ENCODE measurements at regions of chr6 and their contacts with region 1.

Region 1: GRCh38 chr6:142387997-142388815 is 86.4 kb downstream of the ADGRG6 start:
- DNase-seq: peak; percentile 72
- ATAC-seq: peak; percentile 67
- H3K4me3 ChIP-seq: no peak overlapping the region
- H3K27ac ChIP-seq: peak overlapping the region; percentile 92
- H3K4me1 ChIP-seq: peaks cover 37% of the 10 kb centered on the region
- H3K27me3 ChIP-seq: no peaks in the 10 kb centered on the region
- CTCF ChIP-seq: peak; percentile 77

Region 2: DNA sequence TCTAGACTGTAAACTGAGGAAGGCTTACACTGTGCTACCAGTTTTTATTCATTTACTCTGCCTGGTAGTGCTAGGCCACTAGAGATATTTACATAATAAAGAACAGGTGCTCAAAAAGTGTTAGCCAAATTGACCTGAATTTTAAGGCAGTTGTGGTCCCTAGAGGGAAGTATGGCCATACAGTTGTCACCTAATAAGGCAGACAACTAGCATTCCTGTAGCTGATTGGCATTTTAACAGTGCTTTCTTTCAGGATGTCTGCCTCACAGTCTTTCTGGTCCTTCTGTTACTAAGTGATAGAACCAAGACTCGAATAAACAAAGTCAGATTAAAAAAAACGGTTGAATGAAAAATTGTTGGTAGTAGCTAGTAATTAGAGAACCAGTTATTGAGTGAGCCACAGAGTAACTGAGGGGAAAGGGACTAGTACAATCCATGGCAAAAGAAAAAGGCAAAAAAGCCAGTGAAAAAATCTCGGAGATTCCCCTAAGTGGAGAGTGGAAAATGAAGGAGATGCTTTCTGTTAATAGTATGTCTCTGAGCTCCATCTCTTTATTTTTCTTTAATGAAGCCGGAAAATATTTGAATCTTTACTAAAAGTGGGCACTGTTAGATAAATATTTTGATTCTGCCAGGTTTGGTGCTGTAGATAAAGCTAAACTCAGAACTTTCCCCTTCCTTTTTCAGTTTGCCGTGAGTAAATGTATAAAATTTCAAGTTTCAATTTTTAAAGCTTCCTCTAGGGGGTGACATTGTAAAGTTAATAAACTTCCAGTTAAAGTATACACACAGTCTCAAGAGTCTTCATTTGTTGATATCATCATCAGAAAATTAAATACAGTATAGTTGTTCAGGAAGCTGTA is 232.1 kb before region 1 on chr6:
- CTCF ChIA-PET with region 1: interaction called, 3 read pairs
- POLR2A ChIA-PET with region 1: no interaction called
- intact Hi-C with region 1: loop called (anchors 2 kb)
- DNase-seq: peak; percentile 64
- ATAC-seq: peak; percentile 46
- H3K4me3 ChIP-seq: no peak overlapping the region
- H3K27ac ChIP-seq: no peak overlapping the region
- H3K4me1 ChIP-seq: peaks cover 26% of the 10 kb centered on the region
- H3K27me3 ChIP-seq: no peaks in the 10 kb centered on the region
- CTCF ChIP-seq: peak; percentile 62